Activated T-helper 1 cell treated with anti-CD3 and anti-CD28 coated beads, Interleukin-12 subunit alpha, Interleukin-12 subunit beta, Interleukin-2, Interleukin-4 antibody, amounts not matched to agents 30 ng/mL and 10 ng/mL and 1 ng/mL, durations not matched to agents 14 hours and 24 hours and 36 hours (primary cell): ENCODE measurements at regions of chr17 and their contacts with region 1.

Region 1: GRCh38 chr17:9291912-9292560 is 270.7 kb downstream of the NTN1 start:
- DNase-seq: peak; percentile 11
- H3K4me3 Mint-ChIP-seq: no peak overlapping the region
- H3K27ac Mint-ChIP-seq: no peak overlapping the region
- H3K4me1 Mint-ChIP-seq: peaks cover 22% of the 10 kb centered on the region
- H3K27me3 Mint-ChIP-seq: peaks cover 2% of the 10 kb centered on the region

Region 2: DNA sequence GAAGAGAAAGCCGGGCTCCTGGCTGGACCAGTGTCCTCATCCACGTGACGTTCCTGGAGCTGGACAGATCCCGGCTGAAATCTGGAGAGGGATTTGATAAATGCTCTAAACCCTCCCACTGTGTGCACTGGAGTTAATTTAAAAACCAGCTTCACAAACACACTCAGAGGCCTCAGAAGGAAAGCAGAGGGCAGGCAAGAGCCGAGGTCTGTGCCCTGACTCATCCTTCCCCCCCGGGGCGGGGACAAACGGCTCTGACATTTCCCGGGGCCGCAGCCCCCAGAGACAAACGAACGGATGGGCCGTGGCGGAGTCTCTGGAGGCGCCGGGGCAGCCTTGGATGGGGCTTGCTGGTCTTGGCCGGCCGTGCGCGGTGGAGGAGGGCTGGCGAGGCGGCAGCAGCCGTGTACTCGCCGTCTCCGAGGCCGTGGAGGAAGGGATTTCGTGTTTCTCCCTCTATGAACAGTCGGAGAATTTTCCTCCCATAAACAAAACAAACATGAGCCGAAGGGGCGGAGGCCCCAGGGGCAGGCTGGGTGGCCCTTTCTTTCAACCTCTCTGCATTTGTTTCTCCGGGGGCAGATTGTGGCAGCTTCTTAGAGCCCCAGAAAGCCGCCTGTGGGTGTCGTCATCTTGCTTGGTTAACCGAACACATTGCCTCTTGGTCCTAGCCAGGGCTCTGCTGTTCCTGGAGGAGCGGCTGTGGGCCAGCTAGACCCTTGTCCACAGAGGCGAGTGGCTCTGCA is 176.4 kb before region 1 on chr17:
- intact Hi-C with region 1: loop called (anchors 5 kb)
- DNase-seq: peak; percentile 9
- H3K4me3 Mint-ChIP-seq: peak overlapping the region; percentile 66
- H3K27ac Mint-ChIP-seq: no peak overlapping the region
- H3K4me1 Mint-ChIP-seq: peaks cover 11% of the 10 kb centered on the region
- H3K27me3 Mint-ChIP-seq: peaks cover 5% of the 10 kb centered on the region

Region 3: GRCh38 chr17:9239793-9240658 is 52.0 kb before region 1 on chr17:
- intact Hi-C with region 1: loop called (anchors 1 kb)
- DNase-seq: peak; percentile 61
- H3K4me3 Mint-ChIP-seq: peak overlapping the region; percentile 77
- H3K27ac Mint-ChIP-seq: peak overlapping the region; percentile 63
- H3K4me1 Mint-ChIP-seq: peaks cover 12% of the 10 kb centered on the region
- H3K27me3 Mint-ChIP-seq: no peaks in the 10 kb centered on the region

Region 4: GRCh38 chr17:9273428-9274391 is 18.3 kb before region 1 on chr17:
- intact Hi-C with region 1: loop called (anchors 1 kb)
- DNase-seq: no peak
- H3K4me3 Mint-ChIP-seq: peak overlapping the region; percentile 17
- H3K27ac Mint-ChIP-seq: peak overlapping the region; percentile 77
- H3K4me1 Mint-ChIP-seq: peaks cover 18% of the 10 kb centered on the region
- H3K27me3 Mint-ChIP-seq: no peaks in the 10 kb centered on the region